Activated T-helper 2 cell treated with anti-CD3 and anti-CD28 coated beads, Interferon-gamma antibody, Interleukin-2, Interleukin-4, amounts not matched to agents 10 μg/mL and 5 μg/mL and 100 μg/mL, durations not matched to agents 14 hours and 24 hours and 36 hours (primary cell): ENCODE measurements at regions of chr17 and their contacts with region 1.

Region 1: DNA sequence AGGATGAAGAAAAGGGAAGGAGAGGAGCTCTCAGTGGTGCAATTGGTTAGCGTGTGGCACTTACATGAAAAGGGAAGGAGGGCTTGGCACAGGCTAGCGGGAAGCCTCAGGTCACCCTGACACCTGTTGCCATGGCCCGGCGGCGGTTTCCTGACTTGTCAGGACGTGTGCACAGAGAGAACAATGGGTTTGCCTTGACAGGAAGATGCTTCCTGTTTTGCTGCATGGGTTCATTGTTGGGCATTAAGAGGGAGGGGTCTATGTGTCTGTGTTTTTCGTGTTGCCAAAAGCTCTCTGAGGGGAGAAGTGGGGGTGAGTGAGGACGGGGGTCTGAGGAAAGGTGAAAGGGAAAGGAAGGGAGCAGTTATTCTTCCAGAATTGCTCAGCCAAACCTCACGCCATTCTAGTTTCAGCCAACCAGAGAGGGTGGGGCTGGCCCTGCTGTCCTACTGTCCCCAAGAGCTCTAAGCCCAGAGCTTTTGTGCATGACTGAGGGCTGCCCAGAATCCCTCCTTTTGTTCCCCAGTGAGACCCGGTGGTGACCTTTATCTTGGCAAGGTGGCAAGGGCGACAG is 17.1 kb upstream of the CCR7 start:
- DNase-seq: peak; percentile 52
- H3K4me3 Mint-ChIP-seq: peak overlapping the region; percentile 4
- H3K27ac Mint-ChIP-seq: peak overlapping the region; percentile 75
- H3K4me1 Mint-ChIP-seq: peaks cover 75% of the 10 kb centered on the region
- H3K27me3 Mint-ChIP-seq: no peaks in the 10 kb centered on the region

Region 2: DNA sequence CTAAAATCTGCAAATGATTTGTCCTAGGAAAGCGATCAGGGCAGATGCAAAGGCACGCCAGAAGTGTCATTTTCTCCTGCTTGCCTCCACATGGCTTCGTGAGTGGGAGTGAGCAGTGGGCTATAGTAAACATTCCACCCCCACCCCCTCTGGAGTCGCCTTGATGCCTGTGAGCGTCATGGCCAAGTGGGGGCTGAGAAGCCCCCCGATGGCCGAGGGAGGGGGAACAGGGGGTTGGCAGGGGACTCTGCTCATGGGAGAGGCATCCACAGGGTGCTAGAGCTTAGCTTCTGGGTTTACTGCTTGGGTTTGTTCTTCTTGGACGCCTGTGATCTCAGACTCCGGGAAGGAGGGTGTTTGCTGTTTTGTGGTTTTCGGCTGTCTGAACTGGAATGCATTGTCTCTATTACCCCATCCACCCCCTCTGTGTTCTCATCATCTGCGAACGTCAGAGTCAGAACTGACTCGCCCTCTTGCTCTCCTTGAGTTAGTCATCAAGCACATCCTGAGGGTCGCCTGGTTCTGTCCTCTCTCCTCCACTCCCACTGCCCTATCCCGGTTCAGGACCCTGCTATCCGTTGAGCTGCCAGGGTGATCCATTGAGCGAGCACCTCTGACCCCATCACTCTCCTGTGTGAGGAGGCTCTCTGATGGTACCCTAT is 96.4 kb before region 1 on chr17:
- intact Hi-C with region 1: no loop called
- DNase-seq: no peak
- H3K4me3 Mint-ChIP-seq: no peak overlapping the region
- H3K27ac Mint-ChIP-seq: peak overlapping the region; percentile 81
- H3K4me1 Mint-ChIP-seq: peaks cover 77% of the 10 kb centered on the region
- H3K27me3 Mint-ChIP-seq: no peaks in the 10 kb centered on the region

Region 3: GRCh38 chr17:40559954-40560591 is 22.3 kb before region 1 on chr17:
- intact Hi-C with region 1: loop called (anchors 1 kb)
- DNase-seq: peak; percentile 77
- H3K4me3 Mint-ChIP-seq: peak overlapping the region; percentile 95
- H3K27ac Mint-ChIP-seq: peak overlapping the region; percentile 99
- H3K4me1 Mint-ChIP-seq: peaks cover 61% of the 10 kb centered on the region
- H3K27me3 Mint-ChIP-seq: no peaks in the 10 kb centered on the region

Region 4: GRCh38 chr17:40608061-40608588 is 25.7 kb after region 1 on chr17:
- intact Hi-C with region 1: loop called (anchors 1 kb)
- DNase-seq: no peak
- H3K4me3 Mint-ChIP-seq: peak overlapping the region; percentile 14
- H3K27ac Mint-ChIP-seq: peak overlapping the region; percentile 80
- H3K4me1 Mint-ChIP-seq: peaks cover 89% of the 10 kb centered on the region
- H3K27me3 Mint-ChIP-seq: no peaks in the 10 kb centered on the region

Region 5: DNA sequence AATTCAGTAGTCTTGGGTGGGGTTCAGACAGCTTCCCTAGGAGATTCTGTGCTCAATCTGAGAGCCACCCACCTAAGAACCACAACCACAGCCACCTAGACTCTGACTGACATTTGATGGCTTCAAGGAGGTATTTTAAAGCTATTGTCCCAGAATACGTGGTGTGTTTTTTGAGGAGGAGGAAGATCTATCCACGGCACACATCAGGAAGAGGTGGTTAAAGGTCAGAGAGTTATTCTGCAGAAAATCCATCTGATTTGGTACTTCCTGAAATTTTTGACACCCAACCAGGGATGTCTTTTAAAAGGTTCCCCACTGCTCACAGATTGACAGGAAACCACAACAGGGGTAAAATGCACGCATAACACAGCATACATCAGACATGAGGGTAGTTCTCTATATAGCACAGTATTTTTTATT is 40.1 kb after region 1 on chr17:
- intact Hi-C with region 1: no loop called
- DNase-seq: no peak
- H3K4me3 Mint-ChIP-seq: peak overlapping the region; percentile 6
- H3K27ac Mint-ChIP-seq: peak overlapping the region; percentile 72
- H3K4me1 Mint-ChIP-seq: peaks cover 59% of the 10 kb centered on the region
- H3K27me3 Mint-ChIP-seq: no peaks in the 10 kb centered on the region